ENCODE measurements at regions of chr22 and their contacts with region 1.

Region 1: GRCh38 chr22:28772633-28773460 is at the start of gene CCDC117:
- DNase-seq: peak; percentile 96
- H3K4me3 Mint-ChIP-seq: peak within 1 kb of the TSS; percentile 98
- H3K27ac Mint-ChIP-seq: peak within 1 kb of the TSS; percentile 97
- H3K4me1 Mint-ChIP-seq: peaks cover 24% of the 10 kb centered on the region
- H3K27me3 Mint-ChIP-seq: no peaks in the 10 kb centered on the region
- total RNA-seq, gene CCDC117: 27.7 to 31.6 TPM

Region 2: GRCh38 chr22:28395920-28396753 is 376.7 kb before region 1 on chr22:
- CTCF ChIA-PET with region 1: no interaction called
- POLR2A ChIA-PET with region 1: no interaction called
- intact Hi-C with region 1: loop called (anchors 2 kb)
- DNase-seq: no peak
- H3K4me3 Mint-ChIP-seq: no peak overlapping the region
- H3K27ac Mint-ChIP-seq: peak overlapping the region; percentile 13
- H3K4me1 Mint-ChIP-seq: peaks cover 4% of the 10 kb centered on the region
- H3K27me3 Mint-ChIP-seq: peaks cover 5% of the 10 kb centered on the region

Region 3: GRCh38 chr22:28791841-28792490 is 19.1 kb after region 1 on chr22:
- CTCF ChIA-PET with region 1: interaction called, 36 read pairs
- POLR2A ChIA-PET with region 1: interaction called, 13 read pairs
- intact Hi-C with region 1: loop called (anchors 1 kb)
- DNase-seq: no peak
- H3K4me3 Mint-ChIP-seq: no peak overlapping the region
- H3K27ac Mint-ChIP-seq: peak overlapping the region; percentile 1
- H3K4me1 Mint-ChIP-seq: peaks cover 50% of the 10 kb centered on the region
- H3K27me3 Mint-ChIP-seq: no peaks in the 10 kb centered on the region

Region 4: GRCh38 chr22:28800308-28801077 is 27.6 kb after region 1 on chr22 and contains the start of gene XBP1:
- CTCF ChIA-PET with region 1: interaction called, 36 read pairs
- POLR2A ChIA-PET with region 1: interaction called, 70 read pairs
- intact Hi-C with region 1: loop called (anchors 1 kb)
- DNase-seq: peak; percentile 92
- H3K4me3 Mint-ChIP-seq: peak within 1 kb of the TSS; percentile 94
- H3K27ac Mint-ChIP-seq: peak within 1 kb of the TSS; percentile 96
- H3K4me1 Mint-ChIP-seq: peaks cover 46% of the 10 kb centered on the region
- H3K27me3 Mint-ChIP-seq: no peaks in the 10 kb centered on the region
- total RNA-seq, gene XBP1: 128 to 132 TPM

Region 5: GRCh38 chr22:28810821-28811491 is 38.1 kb after region 1 on chr22:
- CTCF ChIA-PET with region 1: interaction called, 4 read pairs
- POLR2A ChIA-PET with region 1: interaction called, 5 read pairs
- intact Hi-C with region 1: loop called (anchors 1 kb)
- DNase-seq: peak; percentile 60
- H3K4me3 Mint-ChIP-seq: peak overlapping the region; percentile 64
- H3K27ac Mint-ChIP-seq: peak overlapping the region; percentile 84
- H3K4me1 Mint-ChIP-seq: peaks cover 65% of the 10 kb centered on the region
- H3K27me3 Mint-ChIP-seq: no peaks in the 10 kb centered on the region

Region 6: GRCh38 chr22:28907311-28908008 is 134.6 kb after region 1 on chr22:
- CTCF ChIA-PET with region 1: no interaction called
- POLR2A ChIA-PET with region 1: no interaction called
- intact Hi-C with region 1: loop called (anchors 1 kb)
- DNase-seq: peak; percentile 89
- H3K4me3 Mint-ChIP-seq: no peak overlapping the region
- H3K27ac Mint-ChIP-seq: peak overlapping the region; percentile 70
- H3K4me1 Mint-ChIP-seq: peaks cover 34% of the 10 kb centered on the region
- H3K27me3 Mint-ChIP-seq: peaks cover 44% of the 10 kb centered on the region

Region 7: DNA sequence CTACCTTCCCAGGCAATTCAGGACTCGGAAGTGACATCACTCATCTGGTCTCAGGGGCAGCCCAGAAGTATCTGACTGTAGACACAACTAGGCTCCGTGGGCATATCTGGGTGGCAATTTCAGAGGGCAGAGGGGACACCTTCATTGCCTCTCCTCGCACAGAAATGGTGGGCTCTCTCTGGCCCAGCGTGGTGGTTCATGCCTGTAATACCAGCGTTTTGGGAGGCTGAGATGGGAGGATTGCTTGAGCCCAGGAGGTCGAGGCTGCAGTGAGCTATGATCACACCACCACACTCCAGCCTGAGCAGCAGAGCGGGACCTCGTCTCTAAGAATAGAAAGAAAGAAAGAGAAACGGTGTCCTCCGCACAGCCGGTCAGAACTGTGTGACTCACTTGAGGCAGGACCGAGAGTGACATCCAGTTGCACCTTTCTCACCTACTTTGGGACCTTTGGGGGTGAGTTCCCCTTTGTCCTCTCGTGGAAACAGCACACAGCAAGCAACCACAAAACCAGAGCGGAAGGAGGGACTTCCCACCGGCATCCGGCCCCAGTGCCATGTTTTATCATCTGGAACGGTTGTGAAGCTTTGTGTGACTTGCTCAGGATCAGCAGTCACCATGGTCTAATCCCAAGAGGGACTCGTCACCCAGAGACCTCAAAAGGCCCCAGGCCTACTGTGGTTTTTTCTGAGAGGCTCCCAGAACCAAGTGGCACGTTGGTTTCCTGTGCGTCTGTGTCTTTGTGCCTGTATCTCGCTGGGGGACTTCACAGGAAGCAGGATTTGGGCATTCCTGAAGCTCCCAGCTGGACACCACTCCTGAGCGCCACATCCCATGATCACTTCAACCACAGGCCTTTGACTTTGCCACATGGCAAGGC is 394.4 kb after region 1 on chr22:
- CTCF ChIA-PET with region 1: no interaction called
- POLR2A ChIA-PET with region 1: no interaction called
- intact Hi-C with region 1: loop called (anchors 1 kb)
- DNase-seq: peak; percentile 87
- H3K4me3 Mint-ChIP-seq: peak overlapping the region; percentile 32
- H3K27ac Mint-ChIP-seq: peak overlapping the region; percentile 54
- H3K4me1 Mint-ChIP-seq: peaks cover 19% of the 10 kb centered on the region
- H3K27me3 Mint-ChIP-seq: peaks cover 6% of the 10 kb centered on the region